ENCODE measurements at regions of chr9 and their contacts with region 1.

Region 1: GRCh38 chr9:90870621-90871326 is 69.2 kb downstream of the SYK start:
- DNase-seq: peak; percentile 2
- H3K4me3 ChIP-seq: no peak overlapping the region
- H3K27me3 ChIP-seq: no peaks in the 10 kb centered on the region
- CTCF ChIP-seq: peak; percentile 88

Region 2: DNA sequence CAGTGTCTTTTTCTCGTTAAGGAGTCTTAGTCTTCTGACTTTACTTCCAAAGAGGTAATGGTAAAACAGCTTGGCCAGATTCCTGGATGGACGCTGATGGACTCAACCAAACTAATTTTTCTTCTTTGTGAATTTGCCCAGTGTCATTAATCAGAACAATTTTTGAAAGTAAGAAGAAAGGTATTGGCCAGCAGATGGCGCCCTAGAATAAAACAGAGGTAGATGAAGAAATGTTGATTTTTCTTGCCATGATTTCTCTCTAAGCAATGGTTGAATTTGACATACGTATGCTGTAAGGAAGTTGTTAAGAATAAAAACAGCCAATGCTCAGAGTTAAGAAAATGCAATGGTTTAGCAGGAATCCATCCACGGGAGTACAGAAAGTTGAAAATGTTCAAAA is 728.2 kb before region 1 on chr9:
- CTCF ChIA-PET with region 1: interaction called, 14 read pairs
- POLR2A ChIA-PET with region 1: no interaction called
- DNase-seq: no peak
- H3K4me3 ChIP-seq: no peak overlapping the region
- H3K27me3 ChIP-seq: no peaks in the 10 kb centered on the region
- CTCF ChIP-seq: peak; percentile 46

Region 3: GRCh38 chr9:90854637-90855175 is 16.1 kb before region 1 on chr9:
- CTCF ChIA-PET with region 1: no interaction called
- POLR2A ChIA-PET with region 1: no interaction called
- DNase-seq: no peak
- H3K4me3 ChIP-seq: no peak overlapping the region
- H3K27me3 ChIP-seq: no peaks in the 10 kb centered on the region
- CTCF ChIP-seq: no peak